ENCODE measurements at regions of chr21 and their contacts with region 1.

Region 1: GRCh38 chr21:29164325-29164942 is 34.0 kb downstream of the MAP3K7CL start:
- H3K4me3 ChIP-seq: no peak overlapping the region
- H3K27ac ChIP-seq: no peak overlapping the region
- H3K4me1 ChIP-seq: no peaks in the 10 kb centered on the region
- CTCF ChIP-seq: no peak

Region 2: GRCh38 chr21:29181799-29182470 is 17.5 kb after region 1 on chr21:
- CTCF ChIA-PET with region 1: interaction called, 15 read pairs
- POLR2A ChIA-PET with region 1: no interaction called
- H3K4me3 ChIP-seq: peak overlapping the region; percentile 20
- H3K27ac ChIP-seq: no peak overlapping the region
- H3K4me1 ChIP-seq: no peaks in the 10 kb centered on the region
- CTCF ChIP-seq: no peak

Region 3: GRCh38 chr21:29265690-29266479 is 101.5 kb after region 1 on chr21:
- CTCF ChIA-PET with region 1: no interaction called
- POLR2A ChIA-PET with region 1: no interaction called
- H3K4me3 ChIP-seq: no peak overlapping the region
- H3K27ac ChIP-seq: no peak overlapping the region
- H3K4me1 ChIP-seq: no peaks in the 10 kb centered on the region
- CTCF ChIP-seq: no peak

Region 4: GRCh38 chr21:29298348-29299045 is 134.1 kb after region 1 on chr21 and contains the start of gene BACH1:
- CTCF ChIA-PET with region 1: interaction called, 14 read pairs
- POLR2A ChIA-PET with region 1: interaction called, 3 read pairs
- H3K4me3 ChIP-seq: peak within 1 kb of the TSS; percentile 54
- H3K27ac ChIP-seq: peak within 1 kb of the TSS; percentile 73; the same call in 1 of the 2 replicates
- H3K4me1 ChIP-seq: peaks cover 18% of the 10 kb centered on the region; the same call in 1 of the 2 replicates
- CTCF ChIP-seq: no peak; the same call in 1 of the 2 replicates

Region 5: GRCh38 chr21:29351691-29352090 is 187.3 kb after region 1 on chr21:
- CTCF ChIA-PET with region 1: interaction called, 41 read pairs
- POLR2A ChIA-PET with region 1: no interaction called
- H3K4me3 ChIP-seq: no peak overlapping the region
- H3K27ac ChIP-seq: no peak overlapping the region
- H3K4me1 ChIP-seq: no peaks in the 10 kb centered on the region
- CTCF ChIP-seq: no peak

Region 6: GRCh38 chr21:29382006-29382654 is 217.7 kb after region 1 on chr21:
- CTCF ChIA-PET with region 1: interaction called, 20 read pairs
- POLR2A ChIA-PET with region 1: no interaction called
- H3K4me3 ChIP-seq: no peak overlapping the region
- H3K27ac ChIP-seq: no peak overlapping the region
- H3K4me1 ChIP-seq: no peaks in the 10 kb centered on the region
- CTCF ChIP-seq: no peak

Measured in HEK293 (cell line).